ENCODE measurements at regions of chr3 and their contacts with region 1.

Region 1: GRCh38 chr3:122942937-122943827 is 84.4 kb downstream of the SEMA5B start:
- DNase-seq: peak; percentile 48 to 67 (median 64)
- ATAC-seq: peak; percentile 86
- H3K4me3 ChIP-seq: no peak overlapping the region
- H3K27ac ChIP-seq: no peak overlapping the region
- H3K4me1 ChIP-seq: peaks cover 5 to 8% of the 10 kb centered on the region in 2 experiments; a peak in 3 of 5 replicates
- H3K27me3 ChIP-seq: peaks cover 0 to 10% of the 10 kb centered on the region in 2 experiments; a peak in 2 of 5 replicates
- CTCF ChIP-seq: peak; percentile 69 to 79 (median 79)
- EP300 ChIP-seq: no peak
- POLR2A ChIP-seq: no peak
- RAD21 ChIP-seq: peak; percentile 43 to 74; a peak in 3 of 4 replicates

Region 2: DNA sequence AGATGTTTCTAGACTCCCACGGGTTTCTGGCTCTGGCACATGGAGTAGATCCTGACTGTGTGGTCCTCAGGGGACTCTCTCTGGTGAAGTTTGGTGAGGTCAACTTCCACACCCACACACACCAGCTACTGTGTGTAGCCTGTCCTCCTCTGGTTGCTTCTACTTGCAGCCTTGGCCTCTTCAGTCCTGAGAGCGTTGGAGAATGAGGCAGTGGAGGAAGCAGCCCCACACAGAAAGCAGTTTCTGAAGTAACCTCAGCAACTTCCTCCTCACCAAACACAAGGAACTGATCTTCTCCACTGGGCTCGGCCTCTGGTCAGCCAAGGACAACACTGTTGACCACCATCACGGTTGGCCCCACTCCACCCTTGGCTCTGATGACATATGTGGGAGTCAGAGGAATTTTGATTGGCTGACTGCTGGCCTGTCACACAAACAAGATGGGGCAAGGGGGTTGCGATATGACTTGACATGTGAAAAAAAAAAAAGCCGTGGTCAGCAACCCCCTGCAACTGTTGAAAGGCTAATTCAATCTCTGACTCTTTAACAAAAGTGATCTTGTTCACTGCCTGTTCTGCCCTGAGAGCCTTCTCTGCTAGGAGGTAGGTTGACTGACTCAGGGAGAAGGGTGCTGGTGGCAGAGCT is 868.4 kb before region 1 on chr3:
- CTCF ChIA-PET with region 1: no interaction called
- POLR2A ChIA-PET with region 1: no interaction called
- in situ Hi-C with region 1: loop called (anchors 10 kb)
- intact Hi-C with region 1: no loop called
- DNase-seq: no peak
- ATAC-seq: no peak
- H3K4me3 ChIP-seq: no peak overlapping the region
- H3K27ac ChIP-seq: no peak overlapping the region
- H3K4me1 ChIP-seq: no peaks in the 10 kb centered on the region
- H3K27me3 ChIP-seq: peaks cover 0 to 6% of the 10 kb centered on the region in 2 experiments; a peak in 1 of 5 replicates
- CTCF ChIP-seq: no peak
- EP300 ChIP-seq: no peak
- POLR2A ChIP-seq: no peak
- RAD21 ChIP-seq: no peak

Region 3: DNA sequence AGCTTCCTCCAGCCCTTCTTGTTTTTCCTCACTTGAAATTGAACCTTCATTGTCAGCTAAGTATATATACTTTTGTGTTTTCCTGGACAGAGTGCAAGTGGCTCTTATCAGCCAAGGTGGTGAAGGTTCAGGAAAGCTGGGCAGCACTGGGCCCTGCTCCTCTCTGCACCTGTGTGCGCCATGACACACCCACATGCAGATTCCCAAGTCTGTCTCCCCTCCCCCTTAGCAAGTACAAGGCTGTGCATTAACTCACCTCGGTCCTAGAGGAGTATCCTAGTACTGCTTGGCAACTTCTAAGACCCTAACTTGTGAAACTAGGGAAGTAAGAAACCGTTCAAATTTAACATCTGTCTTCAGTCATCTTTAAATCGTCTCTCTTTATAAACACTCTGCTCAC is 62.6 kb before region 1 on chr3:
- CTCF ChIA-PET with region 1: no interaction called
- POLR2A ChIA-PET with region 1: no interaction called
- in situ Hi-C with region 1: no loop called
- intact Hi-C with region 1: no loop called
- DNase-seq: no peak
- ATAC-seq: no peak
- H3K4me3 ChIP-seq: no peak overlapping the region
- H3K27ac ChIP-seq: no peak overlapping the region
- H3K4me1 ChIP-seq: no peaks in the 10 kb centered on the region
- H3K27me3 ChIP-seq: peaks cover 0 to 6% of the 10 kb centered on the region in 2 experiments; a peak in 1 of 5 replicates
- CTCF ChIP-seq: no peak
- EP300 ChIP-seq: no peak
- POLR2A ChIP-seq: no peak
- RAD21 ChIP-seq: no peak

Region 4: GRCh38 chr3:122921791-122922651 is 21.2 kb before region 1 on chr3:
- CTCF ChIA-PET with region 1: no interaction called
- POLR2A ChIA-PET with region 1: no interaction called
- in situ Hi-C with region 1: no loop called
- intact Hi-C with region 1: no loop called
- DNase-seq: peak; percentile 55 to 81 (median 76)
- ATAC-seq: peak; percentile 98
- H3K4me3 ChIP-seq: no peak overlapping the region; the same call in 1 of the 2 replicates
- H3K27ac ChIP-seq: no peak overlapping the region
- H3K4me1 ChIP-seq: peaks cover 0 to 9% of the 10 kb centered on the region in 2 experiments; a peak in 3 of 5 replicates
- H3K27me3 ChIP-seq: peaks cover 11 to 55% of the 10 kb centered on the region in 2 experiments; a peak in 4 of 5 replicates
- CTCF ChIP-seq: peak; percentile 28 to 63 (median 34); a peak in 4 of 6 replicates
- EP300 ChIP-seq: no peak
- POLR2A ChIP-seq: no peak
- RAD21 ChIP-seq: peak in 1 of 2 experiments; percentile 39; a peak in 1 of 4 replicates

Region 5: GRCh38 chr3:122984007-122984406 is 40.8 kb after region 1 on chr3:
- CTCF ChIA-PET with region 1: no interaction called
- POLR2A ChIA-PET with region 1: no interaction called
- in situ Hi-C with region 1: no loop called
- intact Hi-C with region 1: no loop called
- DNase-seq: no peak
- ATAC-seq: peak; percentile 46; the same call in 2 of the 3 replicates
- H3K4me3 ChIP-seq: no peak overlapping the region
- H3K27ac ChIP-seq: no peak overlapping the region
- H3K4me1 ChIP-seq: no peaks in the 10 kb centered on the region
- H3K27me3 ChIP-seq: peaks cover 5 to 58% of the 10 kb centered on the region in 2 experiments; a peak in 3 of 5 replicates
- CTCF ChIP-seq: no peak
- EP300 ChIP-seq: no peak
- POLR2A ChIP-seq: no peak
- RAD21 ChIP-seq: no peak

Region 6: GRCh38 chr3:123028233-123028828 is 85.1 kb after region 1 on chr3:
- CTCF ChIA-PET with region 1: interaction called, 3 read pairs
- POLR2A ChIA-PET with region 1: interaction called, 4 read pairs
- in situ Hi-C with region 1: no loop called
- intact Hi-C with region 1: loop called (anchors 2 kb)
- DNase-seq: peak; percentile 47 to 56 (median 52)
- ATAC-seq: peak; percentile 71
- H3K4me3 ChIP-seq: peak overlapping the region; percentile 18; the same call in 1 of the 2 replicates
- H3K27ac ChIP-seq: no peak overlapping the region
- H3K4me1 ChIP-seq: peaks cover 5 to 20% of the 10 kb centered on the region in 2 experiments; a peak in 4 of 5 replicates
- H3K27me3 ChIP-seq: peaks cover 15 to 40% of the 10 kb centered on the region in 2 experiments; a peak in 4 of 5 replicates
- CTCF ChIP-seq: peak; percentile 49 to 59 (median 49); a peak in 5 of 6 replicates
- EP300 ChIP-seq: no peak
- POLR2A ChIP-seq: no peak
- RAD21 ChIP-seq: peak; percentile 54 to 57

Region 7: DNA sequence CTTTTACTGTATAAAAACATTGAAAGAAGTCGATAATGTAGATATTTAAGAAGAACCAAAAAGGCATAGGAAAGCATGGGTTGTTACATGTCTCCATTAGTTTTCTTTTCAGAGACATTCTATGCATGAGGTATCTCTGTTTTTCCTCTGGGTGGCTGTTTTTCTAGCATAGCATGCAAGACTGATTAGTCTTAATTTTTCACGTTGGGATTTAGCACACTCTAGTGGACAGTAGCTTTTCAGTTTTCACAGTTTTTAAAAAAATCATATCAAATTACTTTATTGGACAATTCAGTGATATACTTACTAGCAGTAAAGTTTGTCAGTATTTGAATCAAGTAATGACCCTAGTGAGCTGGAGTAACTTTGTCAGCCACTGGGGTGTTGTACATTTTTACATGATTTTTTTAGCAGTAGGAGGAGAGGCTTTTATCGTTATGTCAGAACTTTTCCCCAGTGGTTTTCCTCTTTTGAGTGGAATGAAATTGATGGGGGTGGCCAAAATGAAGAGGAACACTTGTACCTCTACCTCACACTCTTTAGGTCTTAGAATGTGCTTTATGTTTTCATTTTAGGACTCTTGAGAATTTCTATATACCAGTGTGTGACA is 315.7 kb after region 1 on chr3:
- CTCF ChIA-PET with region 1: no interaction called
- POLR2A ChIA-PET with region 1: interaction called, 3 read pairs
- in situ Hi-C with region 1: no loop called
- intact Hi-C with region 1: loop called (anchors 10 kb)
- DNase-seq: peak in 2 of 4 experiments; percentile 9 to 39
- ATAC-seq: peak; percentile 83
- H3K4me3 ChIP-seq: no peak overlapping the region
- H3K27ac ChIP-seq: no peak overlapping the region
- H3K4me1 ChIP-seq: no peaks in the 10 kb centered on the region; a peak in 1 of 5 replicates
- H3K27me3 ChIP-seq: no peaks in the 10 kb centered on the region
- CTCF ChIP-seq: peak; percentile 44 to 73 (median 66); a peak in 5 of 6 replicates
- EP300 ChIP-seq: no peak
- POLR2A ChIP-seq: no peak
- RAD21 ChIP-seq: peak; percentile 28 to 67; a peak in 3 of 4 replicates